ENCODE measurements at regions of chr7 and their contacts with region 1.

Region 1: DNA sequence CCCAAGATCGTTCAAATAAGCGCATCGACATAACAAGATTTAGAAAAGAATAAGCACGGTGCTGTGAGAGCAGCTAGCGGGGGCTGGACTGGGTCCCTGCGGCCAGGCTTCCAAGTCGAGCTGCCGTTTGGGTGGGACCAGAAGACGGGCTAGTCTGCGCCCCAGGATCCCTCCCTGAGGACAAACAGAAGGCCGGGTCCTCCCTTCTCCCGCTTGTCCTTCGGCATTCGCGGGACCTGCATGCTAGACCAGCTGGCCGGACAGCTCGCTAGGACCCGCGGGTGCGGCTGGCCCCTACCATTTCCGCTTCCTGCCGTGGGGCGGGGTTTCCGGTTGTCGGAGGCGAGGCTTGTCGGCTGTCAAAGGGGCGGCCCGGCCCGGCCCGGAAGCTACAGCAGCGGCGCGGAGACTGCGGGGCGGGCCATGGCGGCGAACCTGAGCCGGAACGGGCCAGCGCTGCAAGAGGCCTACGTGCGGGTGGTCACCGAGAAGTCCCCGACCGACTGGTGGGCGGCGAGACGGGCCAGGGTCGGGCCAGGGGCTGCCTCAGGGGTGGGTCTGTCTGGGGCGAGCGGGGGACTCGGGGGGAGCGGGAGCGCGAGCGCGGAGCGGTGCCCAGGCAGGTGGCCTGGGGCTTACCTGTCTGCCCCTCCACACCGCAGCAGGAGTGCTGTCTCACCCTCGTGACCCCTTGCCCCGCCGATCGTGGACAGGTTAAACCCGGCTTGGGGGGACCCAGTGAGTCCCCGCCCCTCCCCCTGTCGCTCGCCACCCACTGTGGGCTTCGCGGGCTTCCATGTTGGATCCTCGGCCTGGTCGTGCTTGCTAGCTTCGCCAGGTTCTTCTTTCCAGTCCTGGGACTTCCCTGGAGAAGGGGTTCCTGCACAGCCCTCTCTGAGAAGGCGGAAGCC is at the start of gene DBNL:
- DNase-seq: peak; percentile 44 to 97
- H3K4me3 ChIP-seq: peak within 1 kb of the TSS; percentile 79 to 92 (median 83)
- H3K27ac ChIP-seq: no peak within 1 kb of the TSS
- H3K4me1 ChIP-seq: peaks cover 0 to 6% (median 0%) of the 10 kb centered on the region in 4 experiments; a peak in 3 of 7 replicates
- H3K27me3 ChIP-seq: no peaks in the 10 kb centered on the region; a peak in 2 of 7 replicates
- CTCF ChIP-seq: no peak
- EP300 ChIP-seq: no peak
- POLR2A ChIP-seq: no peak
- RAD21 ChIP-seq: no peak
- total RNA-seq, gene DBNL: 30.9 and 32.1 TPM in 2 replicates

Region 2: GRCh38 chr7:44059219-44060090 is 14.9 kb after region 1 on chr7:
- CTCF ChIA-PET with region 1: interaction called, 9 read pairs
- POLR2A ChIA-PET with region 1: interaction called, 16 read pairs
- DNase-seq: no peak
- H3K4me3 ChIP-seq: no peak overlapping the region
- H3K27ac ChIP-seq: no peak overlapping the region
- H3K4me1 ChIP-seq: peaks cover 0 to 11% (median 9%) of the 10 kb centered on the region in 4 experiments; a peak in 6 of 7 replicates
- H3K27me3 ChIP-seq: no peaks in the 10 kb centered on the region
- CTCF ChIP-seq: no peak
- EP300 ChIP-seq: no peak
- POLR2A ChIP-seq: no peak
- RAD21 ChIP-seq: no peak

Region 3: DNA sequence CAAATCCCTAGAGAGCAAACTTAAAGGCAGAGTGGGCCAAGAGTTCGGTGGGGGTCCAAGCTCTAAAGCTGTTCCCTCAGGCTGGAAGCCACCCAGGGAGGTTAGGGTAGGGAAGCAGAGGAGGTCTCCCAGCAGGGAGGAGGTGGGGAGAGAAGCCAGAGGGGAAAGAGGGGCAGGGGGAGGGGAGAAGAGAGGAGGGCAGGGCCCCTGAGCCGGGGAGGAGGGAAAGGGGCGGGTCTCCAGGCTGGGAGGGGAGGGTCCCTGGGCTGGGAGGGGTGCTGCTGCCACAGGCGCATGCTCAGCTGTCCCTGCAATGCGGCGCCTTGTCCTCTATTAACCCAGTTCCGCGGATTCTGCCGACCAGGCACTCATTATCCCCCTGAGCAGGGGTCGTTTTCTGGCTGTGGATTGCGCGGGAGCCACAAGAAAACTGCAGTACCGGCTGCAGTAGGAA is 231.4 kb after region 1 on chr7:
- CTCF ChIA-PET with region 1: no interaction called
- POLR2A ChIA-PET with region 1: no interaction called
- DNase-seq: peak; percentile 67 to 80
- H3K4me3 ChIP-seq: peak overlapping the region; percentile 4 to 52 (median 22); a peak in 6 of 8 replicates
- H3K27ac ChIP-seq: no peak overlapping the region
- H3K4me1 ChIP-seq: peaks cover 0 to 10% (median 5%) of the 10 kb centered on the region in 4 experiments; a peak in 5 of 7 replicates
- H3K27me3 ChIP-seq: peaks cover 0 to 25% (median 17%) of the 10 kb centered on the region in 4 experiments; a peak in 5 of 7 replicates
- CTCF ChIP-seq: no peak
- EP300 ChIP-seq: no peak
- POLR2A ChIP-seq: no peak
- RAD21 ChIP-seq: no peak